ENCODE measurements at regions of chr14 and their contacts with region 1.

Region 1: DNA sequence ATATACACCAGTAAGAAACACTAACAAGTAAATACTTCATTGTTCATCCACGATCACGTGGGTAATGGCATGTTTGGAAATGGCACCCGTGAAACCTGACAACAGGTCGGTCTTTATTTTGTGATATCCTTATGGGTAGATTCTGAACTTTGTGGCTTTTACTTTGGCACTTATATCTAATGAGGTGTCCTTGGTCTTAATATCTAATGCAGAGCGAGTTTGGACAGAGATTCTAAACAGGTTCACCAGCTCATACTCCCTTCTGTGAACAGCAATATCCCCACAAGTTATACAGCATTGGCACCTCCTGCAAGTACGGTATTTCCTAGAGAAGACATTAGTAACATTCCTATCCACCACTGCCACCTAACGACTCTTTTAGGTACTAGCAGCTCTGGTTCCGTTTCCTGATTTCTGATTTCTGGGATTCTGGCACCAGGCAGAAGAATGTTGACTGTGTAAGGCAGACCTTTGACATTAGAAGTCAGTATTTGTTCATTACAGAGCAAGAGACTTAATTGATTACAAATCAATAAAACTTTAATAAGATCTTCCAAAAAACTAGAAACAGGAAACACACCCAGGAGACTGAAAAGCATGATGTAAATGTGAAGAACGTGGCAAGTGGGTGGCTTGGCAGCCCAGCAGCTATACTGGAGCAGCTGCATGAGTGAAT is 2.4 kb downstream of the ANG start:
- DNase-seq: no peak
- ATAC-seq: peak; percentile 85

Region 2: GRCh38 chr14:20530771-20531571 is 160.0 kb before region 1 on chr14:
- intact Hi-C with region 1: loop called (anchors 5 kb)
- DNase-seq: peak; percentile 83
- ATAC-seq: no peak

Region 3: DNA sequence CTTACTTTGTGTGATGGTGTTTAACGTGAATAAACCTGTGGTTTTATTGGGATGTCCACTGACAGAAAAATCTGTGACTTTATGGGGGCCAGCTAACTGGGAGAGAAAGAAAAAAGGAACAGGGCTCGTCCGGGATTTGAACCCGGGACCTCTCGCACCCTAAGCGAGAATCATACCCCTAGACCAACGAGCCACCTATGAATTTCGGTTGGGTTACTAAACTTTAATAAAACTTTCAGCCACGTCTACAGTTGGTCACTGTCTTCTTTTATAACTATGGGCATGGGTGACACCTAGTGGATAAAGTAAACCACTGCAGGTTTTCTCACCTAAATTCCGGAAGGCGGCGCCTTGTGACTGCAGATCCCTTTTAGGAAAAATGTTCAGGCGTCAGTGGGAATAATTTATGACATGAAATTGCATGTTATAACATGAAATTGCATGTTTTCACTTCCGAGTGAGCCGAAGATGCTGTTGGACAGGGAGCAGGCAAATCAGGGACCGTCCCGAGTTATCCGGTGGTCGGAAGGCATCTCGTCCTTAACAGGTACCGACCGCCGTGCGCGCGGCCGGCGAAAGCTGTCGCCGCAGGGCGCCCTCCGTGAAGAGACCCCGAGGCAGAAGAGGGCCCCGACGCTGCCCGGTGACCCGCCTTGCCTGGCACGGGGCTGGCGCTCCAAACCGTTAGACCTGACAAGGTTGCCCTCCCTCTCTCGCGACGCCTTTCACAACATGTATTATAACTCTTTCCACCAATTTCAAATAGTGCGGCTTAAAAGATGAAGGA is 81.6 kb before region 1 on chr14:
- intact Hi-C with region 1: no loop called
- DNase-seq: peak; percentile 80
- ATAC-seq: peak; percentile 61

Region 4: GRCh38 chr14:20644520-20644919 is 46.5 kb before region 1 on chr14:
- intact Hi-C with region 1: no loop called
- DNase-seq: no peak
- ATAC-seq: no peak

Region 5: GRCh38 chr14:20732979-20733635 is 42.1 kb after region 1 on chr14:
- intact Hi-C with region 1: no loop called
- DNase-seq: no peak
- ATAC-seq: peak; percentile 72

Region 6: GRCh38 chr14:20970983-20971704 is 280.2 kb after region 1 on chr14:
- intact Hi-C with region 1: loop called (anchors 10 kb)
- DNase-seq: peak; percentile 95
- ATAC-seq: peak; percentile 97